ENCODE measurements at regions of chr15 and their contacts with region 1.

Region 1: DNA sequence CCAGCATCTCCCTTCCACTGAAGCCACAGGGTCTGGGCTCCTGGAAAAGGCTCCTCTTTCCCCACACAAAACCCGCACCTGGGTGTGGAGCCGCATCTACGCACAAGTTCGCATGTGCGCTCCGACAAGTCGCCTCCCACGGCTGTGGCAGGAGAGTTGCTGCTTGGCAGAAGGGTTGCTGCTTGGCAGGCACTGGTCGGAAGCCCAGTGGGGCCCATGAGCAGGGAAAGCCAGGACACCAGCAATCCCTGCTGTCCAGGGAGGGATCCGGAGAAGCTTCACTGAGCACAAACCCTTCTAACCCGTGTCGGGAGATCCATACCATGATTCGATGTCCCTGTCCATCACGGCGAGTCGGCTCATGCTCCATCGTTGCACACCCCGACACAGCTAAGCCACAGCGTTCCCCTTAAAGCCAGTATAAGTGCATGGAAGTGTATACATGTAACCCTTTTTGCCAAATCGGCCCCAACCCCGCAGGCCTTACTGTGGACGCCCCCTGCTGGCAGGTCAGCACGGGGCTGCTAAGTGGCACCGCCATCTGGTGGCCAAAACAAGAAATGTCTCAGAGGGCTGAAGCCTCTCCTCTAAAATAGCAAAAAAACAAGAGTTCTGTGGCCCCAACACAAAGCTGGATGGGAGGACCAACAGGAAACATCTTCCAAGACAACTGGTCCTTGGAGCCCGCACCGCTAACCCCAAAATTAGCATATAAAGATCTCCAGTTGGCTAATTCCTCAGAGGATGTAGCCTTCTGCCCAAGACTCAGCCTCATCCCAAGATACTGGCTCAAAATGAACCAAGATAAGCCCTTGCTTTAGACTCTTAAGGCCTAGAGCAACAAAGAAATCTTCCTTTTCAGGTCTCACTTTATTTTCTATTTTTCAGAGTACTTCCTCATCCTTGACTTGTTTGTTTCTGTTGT is 8.3 kb downstream of the ANKRD63 start:
- DNase-seq: peak; percentile 80
- ATAC-seq: peak; percentile 46
- H3K4me3 ChIP-seq: no peak overlapping the region
- H3K27ac ChIP-seq: no peak overlapping the region
- H3K4me1 ChIP-seq: no peaks in the 10 kb centered on the region
- H3K27me3 ChIP-seq: no peaks in the 10 kb centered on the region
- CTCF ChIP-seq: peak; percentile 100

Region 2: DNA sequence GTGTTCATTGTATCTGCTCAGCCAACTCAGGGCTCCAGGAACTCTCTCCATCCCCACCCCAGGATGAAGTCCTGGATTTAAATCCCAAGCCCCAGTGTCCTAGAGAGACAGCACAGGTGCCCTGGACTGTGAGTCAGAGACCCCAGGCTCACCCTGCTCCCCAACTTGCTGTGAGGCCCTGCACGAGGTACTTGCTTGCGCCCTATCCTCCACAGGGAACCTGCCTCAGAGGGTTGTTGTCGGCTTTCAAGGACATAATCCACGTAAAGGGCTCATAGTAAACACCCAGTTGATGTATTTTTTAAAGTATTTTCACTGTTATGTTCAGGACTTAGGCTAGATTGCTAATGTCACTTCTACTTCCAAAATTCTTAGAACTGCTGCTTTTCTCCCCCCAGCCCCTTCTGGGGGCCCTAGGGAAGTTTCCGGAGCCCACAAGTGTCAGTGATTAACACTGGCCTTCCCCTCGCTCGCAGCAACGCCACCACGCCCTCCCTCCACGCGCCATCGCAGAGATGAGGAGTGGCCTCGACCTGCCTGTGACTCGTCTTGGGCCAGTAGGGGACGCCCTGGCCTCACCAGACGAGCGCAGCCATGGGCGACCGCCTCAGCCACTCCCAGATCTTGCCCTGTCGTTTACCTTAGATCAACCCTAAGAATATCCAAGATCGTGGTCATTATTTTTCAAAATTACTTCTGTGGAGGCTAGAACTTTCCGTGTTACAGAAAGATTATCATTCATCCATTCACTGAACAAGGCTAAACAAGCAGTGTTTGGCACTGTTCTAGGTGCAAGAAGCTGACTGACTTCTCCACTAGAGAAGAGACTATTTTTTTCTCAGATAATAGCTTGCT is 229.7 kb before region 1 on chr15:
- CTCF ChIA-PET with region 1: interaction called, 6 read pairs
- POLR2A ChIA-PET with region 1: no interaction called
- in situ Hi-C with region 1: no loop called
- intact Hi-C with region 1: loop called (anchors 10 kb)
- DNase-seq: no peak
- ATAC-seq: peak; percentile 98
- H3K4me3 ChIP-seq: peak overlapping the region; percentile 20 to 58
- H3K27ac ChIP-seq: peak overlapping the region; percentile 53
- H3K4me1 ChIP-seq: peaks cover 35% of the 10 kb centered on the region
- H3K27me3 ChIP-seq: no peaks in the 10 kb centered on the region
- CTCF ChIP-seq: peak; percentile 99

Region 3: DNA sequence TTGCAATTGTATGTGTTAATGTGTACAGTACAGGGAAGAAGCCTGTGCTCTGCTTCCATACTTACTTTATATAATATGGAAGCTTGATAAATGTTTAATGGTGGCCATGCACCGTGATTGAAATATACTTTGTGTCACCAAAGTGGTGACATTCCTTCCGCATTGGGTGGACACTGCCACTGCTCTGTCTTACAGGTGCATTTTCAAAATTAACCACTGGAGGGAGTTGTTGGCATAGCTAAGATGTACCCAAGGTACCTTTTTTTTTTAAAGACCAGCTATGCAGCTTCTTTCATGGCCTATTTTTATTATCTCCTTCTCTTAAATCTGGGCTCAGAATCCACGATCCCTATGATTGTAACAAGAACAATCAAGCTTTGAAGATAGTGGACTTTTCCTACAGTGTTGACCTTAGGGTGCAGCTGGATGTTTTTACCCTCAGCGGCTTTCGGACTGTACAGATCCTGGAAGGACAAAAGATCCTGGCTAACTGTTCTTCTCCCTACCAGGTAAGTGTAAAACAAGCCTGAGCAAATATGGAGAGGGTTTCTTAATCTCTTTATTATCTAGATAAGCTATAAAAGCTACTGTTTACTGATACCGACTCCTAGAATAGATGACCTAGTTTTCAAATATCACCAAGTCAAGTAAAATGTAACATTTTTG is 57.3 kb before region 1 on chr15:
- CTCF ChIA-PET with region 1: interaction called, 56 read pairs
- POLR2A ChIA-PET with region 1: no interaction called
- in situ Hi-C with region 1: no loop called
- intact Hi-C with region 1: loop called (anchors 2 kb)
- DNase-seq: peak; percentile 60
- ATAC-seq: peak; percentile 93
- H3K4me3 ChIP-seq: no peak overlapping the region
- H3K27ac ChIP-seq: no peak overlapping the region
- H3K4me1 ChIP-seq: no peaks in the 10 kb centered on the region
- H3K27me3 ChIP-seq: no peaks in the 10 kb centered on the region
- CTCF ChIP-seq: peak; percentile 86

Region 4: DNA sequence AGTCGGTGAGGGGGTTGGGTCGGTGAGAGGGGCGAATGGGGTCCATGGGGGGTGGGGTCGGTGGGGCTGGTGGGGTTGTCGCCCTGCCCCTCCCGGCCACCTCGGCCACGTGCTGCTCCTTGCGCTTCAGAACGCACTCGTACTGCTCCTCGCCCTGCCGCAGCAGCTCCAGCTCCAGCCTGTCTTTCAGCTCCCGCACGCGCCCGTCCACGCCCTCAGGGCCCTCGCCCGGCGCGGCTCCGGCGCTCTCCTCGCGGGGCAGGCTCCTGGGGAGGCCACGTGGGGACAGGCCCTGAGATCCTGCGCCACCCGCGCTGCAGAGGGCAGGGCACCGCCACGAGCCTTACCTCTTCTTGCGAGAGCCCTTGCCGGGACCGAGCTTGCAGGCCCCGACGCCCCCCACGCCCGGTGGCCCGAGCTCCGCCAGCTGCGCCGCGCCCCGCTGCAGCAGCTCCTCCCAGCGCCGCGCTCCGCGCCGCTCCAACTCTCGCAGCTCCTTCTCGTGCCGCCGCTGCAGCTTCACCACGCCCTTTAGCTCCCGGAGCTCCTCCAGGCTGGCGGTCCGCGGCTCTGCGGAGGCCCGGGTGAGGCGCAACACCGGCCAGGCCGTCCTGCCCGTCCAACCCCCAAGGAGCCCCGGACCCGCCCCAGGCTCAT is 16.4 kb after region 1 on chr15:
- CTCF ChIA-PET with region 1: interaction called, 11 read pairs
- POLR2A ChIA-PET with region 1: no interaction called
- in situ Hi-C with region 1: no loop called
- intact Hi-C with region 1: no loop called
- DNase-seq: no peak
- ATAC-seq: peak; percentile 85
- H3K4me3 ChIP-seq: peak overlapping the region; percentile 24 to 33
- H3K27ac ChIP-seq: no peak overlapping the region
- H3K4me1 ChIP-seq: peaks cover 9% of the 10 kb centered on the region; the same call in 1 of the 2 replicates
- H3K27me3 ChIP-seq: no peaks in the 10 kb centered on the region
- CTCF ChIP-seq: no peak

Region 5: DNA sequence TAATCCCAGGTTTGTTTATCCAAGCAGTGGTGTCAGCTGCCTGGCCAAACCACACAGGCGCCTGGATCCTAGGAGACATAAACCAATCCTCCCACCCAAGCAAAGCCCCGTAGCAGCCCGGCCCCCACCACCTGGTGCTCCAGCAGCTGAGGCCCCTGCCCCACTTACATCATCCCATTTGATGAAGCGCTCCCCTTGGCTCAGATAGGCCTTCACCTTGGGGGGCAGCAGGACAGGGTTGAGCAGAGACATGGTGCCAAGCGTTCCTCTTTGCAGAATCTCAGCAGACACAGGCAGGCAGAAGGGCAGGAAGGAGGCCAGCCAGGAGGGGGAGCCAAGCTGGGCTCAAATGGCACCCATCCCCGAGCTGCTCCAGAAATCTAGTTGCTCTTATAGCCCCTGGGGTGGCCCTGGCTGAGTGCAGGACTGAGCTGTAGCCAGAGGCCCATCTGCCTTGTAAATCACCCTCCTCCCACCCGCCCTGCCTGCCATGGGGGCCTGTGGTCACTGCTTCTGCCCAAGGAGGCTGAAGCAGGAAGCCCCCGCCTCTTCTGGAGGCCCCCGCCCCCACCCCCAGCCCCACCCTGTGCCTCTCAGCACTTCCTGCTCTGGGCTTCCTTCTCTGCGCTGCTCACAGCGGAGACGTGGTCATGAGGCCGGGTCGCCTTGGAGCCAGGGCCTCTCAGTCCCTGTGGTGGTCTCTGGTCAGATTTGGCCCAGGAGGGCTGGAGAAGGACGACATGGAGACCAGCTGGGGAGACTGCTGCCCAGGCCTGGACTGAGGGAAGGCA is 33.0 kb after region 1 on chr15 and contains the start of gene PLCB2:
- CTCF ChIA-PET with region 1: interaction called, 33 read pairs
- POLR2A ChIA-PET with region 1: interaction called, 3 read pairs
- in situ Hi-C with region 1: no loop called
- intact Hi-C with region 1: loop called (anchors 1 kb)
- DNase-seq: no peak
- ATAC-seq: peak; percentile 70
- H3K4me3 ChIP-seq: no peak within 1 kb of the TSS
- H3K27ac ChIP-seq: no peak within 1 kb of the TSS
- H3K4me1 ChIP-seq: peaks cover 5% of the 10 kb centered on the region
- H3K27me3 ChIP-seq: no peaks in the 10 kb centered on the region
- CTCF ChIP-seq: no peak; the same call in 1 of the 2 replicates
- total RNA-seq, gene PLCB2: 1.7 TPM

Region 6: DNA sequence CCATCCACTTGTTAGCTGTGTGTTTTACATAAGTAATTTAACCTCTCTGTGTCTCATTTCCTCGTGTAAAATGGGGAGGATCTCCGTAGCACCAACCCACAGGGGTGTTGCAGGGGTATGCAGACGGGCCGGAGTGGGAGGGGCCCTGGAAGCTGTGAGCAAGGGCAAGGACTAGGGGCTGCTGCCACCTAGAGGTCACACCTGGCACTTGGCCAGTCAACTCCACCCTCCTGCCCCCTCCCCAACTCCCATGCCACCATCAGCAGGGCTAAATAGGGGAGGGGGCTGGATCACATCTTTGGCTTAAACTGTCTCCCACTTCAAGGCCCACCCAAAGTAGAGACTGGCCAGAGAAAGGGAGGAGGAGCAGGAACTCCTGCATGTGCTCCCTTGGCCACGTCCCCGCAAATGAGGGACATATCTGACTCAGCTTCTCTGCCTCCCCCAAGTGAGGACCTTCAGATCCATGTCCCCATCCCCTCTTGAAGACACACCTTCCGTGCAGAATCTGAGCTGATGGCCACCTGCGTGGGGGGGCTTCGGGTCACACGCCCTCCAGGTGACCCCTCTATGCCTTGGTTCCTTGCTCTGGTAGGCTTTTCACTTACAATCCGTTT is 63.5 kb after region 1 on chr15:
- CTCF ChIA-PET with region 1: interaction called, 16 read pairs
- POLR2A ChIA-PET with region 1: no interaction called
- in situ Hi-C with region 1: no loop called
- intact Hi-C with region 1: no loop called
- DNase-seq: no peak
- ATAC-seq: peak; percentile 47
- H3K4me3 ChIP-seq: peak overlapping the region in 1 of 2 experiments; percentile 61; a peak in 2 of 4 replicates
- H3K27ac ChIP-seq: peak overlapping the region; percentile 94
- H3K4me1 ChIP-seq: peaks cover 54% of the 10 kb centered on the region
- H3K27me3 ChIP-seq: no peaks in the 10 kb centered on the region
- CTCF ChIP-seq: peak; percentile 96

Region 7: DNA sequence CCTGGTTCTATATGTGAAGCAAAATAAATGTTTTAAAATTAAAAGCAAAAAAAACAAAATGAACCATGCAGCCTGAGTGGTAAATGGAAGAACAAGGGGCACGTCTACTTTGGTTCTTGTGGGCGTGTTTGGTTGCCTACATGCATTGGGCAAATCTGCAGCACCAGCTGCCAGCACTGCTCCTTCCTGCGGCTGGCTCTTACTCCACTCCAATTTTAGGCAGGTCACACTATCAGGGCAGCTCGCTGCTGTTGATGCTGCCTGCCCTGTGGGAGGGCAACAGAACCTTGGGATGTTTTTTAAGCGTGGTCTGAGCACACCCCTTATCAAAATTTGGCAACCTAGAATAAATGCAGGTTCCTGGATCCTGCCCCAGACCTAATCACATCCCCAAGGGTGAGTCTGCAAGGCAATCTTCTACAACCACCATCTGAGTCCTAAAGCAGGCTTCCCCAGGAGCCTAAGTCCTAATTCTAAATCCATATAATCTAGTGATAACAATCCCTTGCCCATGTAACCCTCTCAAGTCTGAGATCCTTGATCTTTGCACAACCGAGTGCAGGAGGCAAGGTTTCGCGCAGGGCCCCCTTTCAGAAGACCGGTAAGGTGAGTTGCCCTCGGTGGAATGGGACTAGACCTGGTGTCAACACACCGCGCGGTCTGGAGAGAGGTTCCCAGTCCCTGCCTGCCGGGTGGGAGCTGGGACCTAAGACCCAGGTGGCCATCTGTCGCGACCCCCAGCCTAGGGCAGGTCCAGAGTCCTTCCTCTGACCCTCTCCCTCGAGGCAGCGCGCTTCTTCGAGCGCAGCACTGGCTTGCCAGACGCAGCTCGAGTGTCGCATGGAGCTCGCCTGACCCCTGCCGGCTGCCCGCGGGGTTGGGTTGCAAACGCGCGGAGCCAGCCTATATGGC is 146.9 kb after region 1 on chr15:
- CTCF ChIA-PET with region 1: interaction called, 14 read pairs
- POLR2A ChIA-PET with region 1: no interaction called
- in situ Hi-C with region 1: no loop called
- intact Hi-C with region 1: loop called (anchors 5 kb)
- DNase-seq: peak; percentile 45
- ATAC-seq: peak; percentile 94
- H3K4me3 ChIP-seq: peak overlapping the region in 1 of 2 experiments; percentile 41; a peak in 2 of 4 replicates
- H3K27ac ChIP-seq: peak overlapping the region; percentile 26; the same call in 1 of the 2 replicates
- H3K4me1 ChIP-seq: peaks cover 19% of the 10 kb centered on the region
- H3K27me3 ChIP-seq: no peaks in the 10 kb centered on the region
- CTCF ChIP-seq: peak; percentile 98